B cell (primary cell): ENCODE measurements at regions of chr11 and their contacts with region 1.

Region 1: DNA sequence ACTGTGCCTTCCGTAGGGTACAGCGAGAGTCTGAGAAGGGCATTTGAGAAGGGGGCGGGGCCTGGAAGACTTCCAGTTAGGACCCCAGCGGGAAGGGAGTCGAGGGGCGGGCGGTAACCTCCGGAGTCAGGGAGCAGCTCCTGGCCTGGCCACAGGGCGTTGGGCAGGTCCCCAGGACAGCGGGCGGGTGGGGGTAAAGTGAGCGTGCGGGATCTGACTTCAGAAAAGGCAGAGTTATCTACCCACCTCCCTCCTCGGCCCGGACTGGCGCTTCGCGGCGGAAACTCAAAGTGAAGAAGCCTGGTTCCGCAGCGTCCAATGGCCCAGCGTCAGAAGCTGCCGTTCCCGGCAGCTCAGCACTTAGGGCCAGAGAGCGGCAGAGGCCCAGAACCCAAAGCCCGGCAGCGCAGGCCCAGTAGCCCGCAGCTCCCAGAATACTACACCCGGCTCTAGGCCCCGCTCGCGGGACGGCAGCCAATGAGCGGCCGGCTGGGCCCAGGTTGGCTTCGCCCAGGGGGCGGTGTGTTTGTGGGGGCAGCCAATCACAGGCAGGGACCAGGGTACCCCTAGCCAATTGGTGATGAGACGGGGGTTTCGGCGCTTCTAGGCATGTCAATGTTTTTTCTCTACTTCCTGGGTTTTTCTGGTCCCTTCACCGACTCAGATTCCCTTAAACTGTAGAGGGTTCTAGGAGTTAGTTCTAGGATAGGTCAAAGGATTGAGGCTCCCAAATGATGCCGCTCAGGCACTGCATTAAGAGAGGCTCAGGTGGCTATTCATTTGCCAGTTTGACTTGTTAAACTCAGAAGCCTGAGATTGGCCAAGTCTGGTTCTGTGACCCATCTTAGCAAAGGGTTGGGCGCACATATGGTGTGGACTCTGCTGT is at the start of gene TRIM68:
- DNase-seq: peak; percentile 93
- ATAC-seq: peak; percentile 99
- H3K4me3 ChIP-seq: peak within 1 kb of the TSS; percentile 65 to 89 (median 79)
- H3K4me3 Mint-ChIP-seq: peak within 1 kb of the TSS; percentile 97
- H3K27ac ChIP-seq: peak within 1 kb of the TSS; percentile 72 to 93
- H3K27ac Mint-ChIP-seq: peak within 1 kb of the TSS; percentile 94
- H3K4me1 ChIP-seq: peaks cover 21 to 29% of the 10 kb centered on the region in 2 donors
- H3K4me1 Mint-ChIP-seq: peaks cover 45% of the 10 kb centered on the region
- H3K27me3 ChIP-seq: no peaks in the 10 kb centered on the region
- H3K27me3 Mint-ChIP-seq: no peaks in the 10 kb centered on the region
- CTCF ChIP-seq: no peak
- total RNA-seq, gene TRIM68: 19.8 and 21.7 TPM in 2 replicates

Region 2: DNA sequence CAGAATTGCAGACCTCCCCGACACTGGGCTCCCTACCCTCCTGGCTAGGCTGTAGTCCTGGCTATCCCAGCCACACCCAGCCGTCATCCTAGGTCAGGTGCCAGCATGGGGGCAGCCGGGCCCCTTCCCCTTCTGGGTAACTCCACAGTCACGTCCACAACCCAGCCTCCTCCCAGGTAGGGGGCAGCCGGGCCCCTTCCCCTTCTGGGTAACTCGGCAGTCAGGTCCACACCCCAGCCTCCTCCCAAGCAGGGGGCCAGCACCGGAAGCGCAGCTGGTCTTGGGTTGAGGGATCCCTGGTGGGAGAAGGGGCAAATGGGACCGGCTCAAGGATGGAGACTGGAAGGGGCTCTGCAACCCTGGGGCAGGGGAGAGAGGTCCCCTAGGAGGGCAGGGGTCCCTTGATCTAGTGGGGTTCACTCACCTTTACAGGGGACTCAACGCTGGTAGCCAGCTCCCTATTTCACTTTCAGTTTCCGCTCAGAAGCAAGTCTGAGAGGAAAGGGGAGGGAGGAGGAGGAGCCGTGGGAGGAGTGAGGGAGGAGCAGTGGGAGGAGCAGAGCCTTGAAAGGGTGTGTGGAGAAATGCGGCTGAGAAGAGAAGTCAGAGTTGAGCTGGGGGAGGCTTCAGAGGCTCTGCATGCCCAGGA is 214.7 kb before region 1 on chr11 and contains the start of gene TRIM21:
- CTCF ChIA-PET with region 1: no interaction called
- POLR2A ChIA-PET with region 1: no interaction called
- intact Hi-C with region 1: loop called (anchors 1 kb)
- DNase-seq: peak; percentile 89
- ATAC-seq: peak; percentile 100
- H3K4me3 ChIP-seq: peak within 1 kb of the TSS; percentile 69 to 99 (median 85)
- H3K4me3 Mint-ChIP-seq: peak within 1 kb of the TSS; percentile 91
- H3K27ac ChIP-seq: peak within 1 kb of the TSS; percentile 68 to 82
- H3K27ac Mint-ChIP-seq: peak within 1 kb of the TSS; percentile 88
- H3K4me1 ChIP-seq: peaks cover 8 to 14% of the 10 kb centered on the region in 2 donors
- H3K4me1 Mint-ChIP-seq: peaks cover 27% of the 10 kb centered on the region
- H3K27me3 ChIP-seq: peaks cover 0 to 2% (median 0%) of the 10 kb centered on the region in 4 experiments
- H3K27me3 Mint-ChIP-seq: peaks cover 5% of the 10 kb centered on the region
- CTCF ChIP-seq: no peak
- total RNA-seq, gene TRIM21: 26.7 and 30.9 TPM in 2 replicates